Gastrocnemius medialis (tissue), 4 donors: ENCODE measurements at regions of chr14 and their contacts with region 1.

Region 1: DNA sequence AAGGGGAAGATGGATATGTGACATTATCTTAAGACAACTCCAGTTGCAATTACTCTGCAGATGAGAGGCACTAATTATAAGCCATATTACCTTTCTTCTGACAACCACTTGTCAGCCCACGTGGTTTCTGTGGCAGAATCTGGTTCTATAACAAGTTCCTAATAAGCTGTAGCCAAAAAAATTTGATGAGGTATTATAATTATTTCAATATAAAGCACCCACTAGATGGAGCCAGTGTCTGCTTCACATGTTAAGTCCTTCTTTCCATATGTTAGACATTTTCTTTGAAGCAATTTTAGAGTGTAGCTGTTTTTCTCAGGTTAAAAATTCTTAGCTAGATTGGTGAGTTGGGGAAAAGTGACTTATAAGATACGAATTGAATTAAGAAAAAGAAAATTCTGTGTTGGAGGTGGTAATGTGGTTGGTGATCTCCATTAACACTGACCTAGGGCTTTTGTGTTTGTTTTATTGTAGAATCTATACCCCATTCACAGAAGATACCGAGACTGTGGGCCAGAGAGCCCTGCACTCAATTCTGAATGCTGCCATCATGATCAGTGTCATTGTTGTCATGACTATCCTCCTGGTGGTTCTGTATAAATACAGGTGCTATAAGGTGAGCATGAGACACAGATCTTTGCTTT is 36.9 kb downstream of the PSEN1 start:
- DNase-seq: no peak
- ATAC-seq: no peak
- H3K4me3 ChIP-seq: no peak overlapping the region
- H3K27ac ChIP-seq: no peak overlapping the region
- H3K4me1 ChIP-seq: peaks cover 0 to 3% of the 10 kb centered on the region in 2 donors
- H3K27me3 ChIP-seq: no peaks in the 10 kb centered on the region
- CTCF ChIP-seq: peak; percentile 14 to 56 (median 27)
- POLR2A ChIP-seq: no peak

Region 2: DNA sequence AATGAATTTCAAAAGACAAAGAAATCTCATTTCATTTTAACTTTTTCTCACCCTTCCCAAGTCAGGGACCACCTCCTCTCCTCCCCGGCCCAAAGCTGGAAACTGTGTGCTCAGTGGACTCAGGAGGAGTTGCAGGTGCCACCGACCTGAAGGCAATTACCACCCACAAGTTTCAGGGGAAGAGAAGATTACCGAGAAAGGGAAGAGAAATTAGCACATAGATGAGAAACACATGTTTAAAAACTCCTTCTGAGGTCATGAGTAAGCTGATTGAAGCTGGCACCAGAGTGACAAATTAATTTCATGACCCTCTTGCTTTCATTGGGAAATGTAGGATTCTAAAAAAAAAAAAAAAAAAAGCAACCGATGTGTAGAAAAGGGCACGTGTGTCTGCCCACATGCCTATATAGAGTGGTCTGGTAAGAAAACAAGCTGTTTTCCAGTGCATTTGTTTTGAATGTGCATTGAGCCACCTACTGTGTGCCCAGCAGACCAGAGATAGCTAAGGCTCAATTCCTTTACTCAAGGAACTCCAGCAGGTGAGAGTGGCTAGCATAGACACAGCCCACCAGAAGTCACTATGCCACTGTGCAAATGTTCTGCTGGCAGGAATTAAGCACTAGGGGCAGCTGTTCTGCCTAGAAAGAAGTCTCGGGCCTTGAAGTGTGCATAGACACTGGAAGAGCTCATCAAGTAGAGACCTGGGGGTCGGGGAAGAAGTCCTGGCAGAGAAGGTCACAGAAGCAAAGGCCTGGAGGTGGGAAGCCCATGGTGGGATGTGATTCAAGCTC is 309.8 kb before region 1 on chr14:
- in situ Hi-C with region 1: no loop called
- intact Hi-C with region 1: no loop called
- DNase-seq: no peak
- ATAC-seq: no peak
- H3K4me3 ChIP-seq: no peak overlapping the region
- H3K27ac ChIP-seq: no peak overlapping the region
- H3K4me1 ChIP-seq: peaks cover 14 to 35% of the 10 kb centered on the region in 2 donors
- H3K27me3 ChIP-seq: no peaks in the 10 kb centered on the region
- CTCF ChIP-seq: no peak
- POLR2A ChIP-seq: no peak

Region 3: DNA sequence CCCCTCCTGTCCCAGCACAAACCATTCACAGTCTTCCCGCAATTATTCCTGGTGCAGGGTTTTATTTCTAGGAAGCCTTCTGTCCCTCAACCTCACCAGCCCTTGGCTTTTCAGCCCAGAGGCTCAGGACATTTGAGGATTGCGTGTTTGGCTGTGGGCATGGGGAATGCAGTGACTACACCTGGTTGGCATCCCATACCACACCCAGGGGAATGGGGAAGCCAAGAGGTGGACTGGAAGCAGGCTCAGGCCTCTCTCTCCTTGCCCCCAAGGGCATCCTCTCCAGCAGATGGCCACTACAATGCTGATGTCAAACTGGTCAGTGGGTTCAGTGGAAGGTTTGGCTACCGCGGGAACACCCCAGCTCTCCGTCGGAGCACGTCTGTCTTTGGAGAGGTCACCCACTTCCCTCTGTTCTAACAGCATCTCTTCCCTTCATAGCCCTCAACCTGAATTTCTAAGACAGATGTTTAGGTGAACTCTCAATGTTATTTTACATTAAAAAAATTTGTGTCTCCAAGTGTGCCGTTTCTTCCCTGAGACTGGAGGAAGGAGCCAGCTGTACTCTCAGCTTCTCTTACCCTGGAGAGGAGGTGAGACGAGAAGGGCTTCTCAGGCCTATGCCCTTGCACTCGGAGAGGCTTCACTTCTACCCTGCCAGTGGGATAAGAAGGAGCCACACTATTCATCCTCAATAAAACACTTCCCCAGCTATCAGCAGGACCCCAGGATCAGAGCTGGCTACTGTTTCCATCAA is 211.5 kb before region 1 on chr14:
- in situ Hi-C with region 1: no loop called
- intact Hi-C with region 1: no loop called
- DNase-seq: no peak
- ATAC-seq: no peak
- H3K4me3 ChIP-seq: no peak overlapping the region
- H3K27ac ChIP-seq: no peak overlapping the region
- H3K4me1 ChIP-seq: no peaks in the 10 kb centered on the region
- H3K27me3 ChIP-seq: no peaks in the 10 kb centered on the region
- CTCF ChIP-seq: no peak
- POLR2A ChIP-seq: no peak

Region 4: GRCh38 chr14:73069585-73069984 is 103.6 kb before region 1 on chr14:
- in situ Hi-C with region 1: no loop called
- intact Hi-C with region 1: no loop called
- DNase-seq: no peak
- ATAC-seq: no peak
- H3K4me3 ChIP-seq: no peak overlapping the region
- H3K27ac ChIP-seq: no peak overlapping the region
- H3K4me1 ChIP-seq: peaks cover 8 to 10% of the 10 kb centered on the region in 2 donors
- H3K27me3 ChIP-seq: no peaks in the 10 kb centered on the region
- CTCF ChIP-seq: no peak
- POLR2A ChIP-seq: no peak

Region 5: DNA sequence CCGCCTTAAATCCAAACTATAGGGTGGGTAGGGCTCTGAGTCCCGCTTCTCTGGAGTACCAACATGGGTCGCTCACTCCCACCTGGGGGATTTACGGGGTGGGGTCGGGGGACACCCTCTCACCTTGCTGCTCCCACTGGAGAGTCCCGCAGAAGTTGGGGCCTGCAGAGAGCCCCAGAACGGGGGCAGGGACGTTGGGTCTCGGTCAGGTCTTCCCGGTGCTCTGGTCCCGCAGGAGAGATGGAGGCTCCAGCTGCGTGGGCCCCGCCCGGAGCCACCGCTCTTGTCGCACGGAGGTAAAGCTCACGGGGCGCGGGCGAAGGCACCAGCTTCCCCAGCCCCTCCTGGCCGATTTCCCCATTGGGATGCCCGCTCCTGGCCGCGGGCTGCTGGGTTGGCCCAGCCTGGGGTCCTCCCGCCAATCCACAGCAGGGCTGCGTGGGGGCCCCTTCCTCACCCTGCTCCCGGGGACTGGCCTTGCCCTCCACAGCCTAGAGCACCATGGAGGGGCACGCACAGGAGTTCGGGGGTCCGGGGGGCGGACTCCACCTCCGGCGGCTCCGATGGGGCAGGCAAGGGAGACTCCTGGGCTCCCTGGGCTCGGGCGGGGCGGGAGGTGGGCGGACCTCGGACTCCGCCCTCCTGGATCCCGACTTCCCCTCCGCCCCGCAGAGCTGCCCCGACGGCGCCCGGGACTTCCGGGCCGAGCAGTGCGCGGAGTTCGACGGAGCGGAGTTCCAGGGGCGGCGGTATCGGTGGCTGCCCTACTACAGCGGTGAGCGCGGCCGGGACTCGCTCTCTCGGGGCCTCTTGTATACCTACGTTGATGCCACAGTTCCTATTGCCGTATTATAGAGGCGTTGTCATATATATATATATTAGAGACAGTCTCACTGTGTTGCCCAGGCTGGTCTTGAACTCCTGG is 72.4 kb after region 1 on chr14:
- in situ Hi-C with region 1: no loop called
- intact Hi-C with region 1: no loop called
- DNase-seq: no peak
- ATAC-seq: peak in 1 of 2 donors; percentile 55
- H3K4me3 ChIP-seq: peak overlapping the region; percentile 41 to 54 (median 52)
- H3K27ac ChIP-seq: no peak overlapping the region
- H3K4me1 ChIP-seq: peaks cover 0 to 5% of the 10 kb centered on the region in 2 donors
- H3K27me3 ChIP-seq: peaks cover 20 to 26% (median 24%) of the 10 kb centered on the region in 3 donors
- CTCF ChIP-seq: no peak
- POLR2A ChIP-seq: no peak

Region 6: GRCh38 chr14:73269729-73270531 is 96.7 kb after region 1 on chr14:
- in situ Hi-C with region 1: no loop called
- intact Hi-C with region 1: loop called (anchors 10 kb)
- DNase-seq: peak in 1 of 2 donors; percentile 39
- ATAC-seq: peak; percentile 35 to 61
- H3K4me3 ChIP-seq: peak overlapping the region; percentile 50 to 85 (median 54)
- H3K27ac ChIP-seq: peak overlapping the region in 3 of 4 donors; percentile 23 to 28 (median 27)
- H3K4me1 ChIP-seq: peaks cover 7 to 21% of the 10 kb centered on the region in 2 donors
- H3K27me3 ChIP-seq: no peaks in the 10 kb centered on the region
- CTCF ChIP-seq: no peak
- POLR2A ChIP-seq: no peak

Region 7: GRCh38 chr14:73458151-73458976 is 285.1 kb after region 1 on chr14 and contains the start of gene NUMB:
- in situ Hi-C with region 1: loop called in 2 of 4 experiments (anchors 10 to 25 kb)
- intact Hi-C with region 1: no loop called
- DNase-seq: peak; percentile 99
- ATAC-seq: peak; percentile 98 to 99
- H3K4me3 ChIP-seq: peak within 1 kb of the TSS; percentile 78 to 94 (median 90)
- H3K27ac ChIP-seq: peak within 1 kb of the TSS; percentile 90 to 94 (median 92)
- H3K4me1 ChIP-seq: peaks cover 50 to 71% of the 10 kb centered on the region in 2 donors
- H3K27me3 ChIP-seq: no peaks in the 10 kb centered on the region
- CTCF ChIP-seq: peak in 3 of 5 experiments; percentile 12 to 27 (median 15)
- POLR2A ChIP-seq: peak; percentile 78 to 85
- total RNA-seq, gene NUMB: 14.3 to 29.8 (median 23.6) TPM

Region 8: DNA sequence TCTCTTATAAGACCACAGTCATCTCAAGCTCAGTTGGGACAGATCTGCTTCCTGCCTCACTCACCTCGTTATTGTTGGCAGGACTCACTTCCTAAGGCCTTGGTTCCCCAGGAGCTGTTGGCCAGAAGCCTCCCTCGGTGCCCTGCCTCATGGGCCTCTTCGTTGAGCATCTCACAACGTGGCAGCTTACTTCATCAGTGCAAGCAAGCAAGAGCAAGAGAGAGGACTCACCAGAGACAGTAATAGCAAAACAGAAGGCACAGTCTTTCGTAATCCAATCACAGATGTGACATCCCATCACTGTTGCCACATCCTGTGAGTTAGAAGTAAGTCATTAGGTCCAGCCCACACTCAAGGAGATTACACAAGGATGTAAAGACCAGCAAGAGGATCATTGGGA is 290.2 kb after region 1 on chr14:
- in situ Hi-C with region 1: loop called in 2 of 4 experiments (anchors 10 to 25 kb)
- intact Hi-C with region 1: no loop called
- DNase-seq: peak; percentile 23 to 52
- ATAC-seq: peak; percentile 30 to 42
- H3K4me3 ChIP-seq: no peak overlapping the region
- H3K27ac ChIP-seq: peak overlapping the region; percentile 11 to 52 (median 40)
- H3K4me1 ChIP-seq: peaks cover 21 to 41% of the 10 kb centered on the region in 2 donors
- H3K27me3 ChIP-seq: no peaks in the 10 kb centered on the region
- CTCF ChIP-seq: no peak
- POLR2A ChIP-seq: peak in 1 of 2 donors; percentile 10

Region 9: GRCh38 chr14:73472185-73473114 is 299.2 kb after region 1 on chr14:
- in situ Hi-C with region 1: loop called in 3 of 4 experiments (anchors 5 to 25 kb)
- intact Hi-C with region 1: loop called (anchors 2 kb)
- DNase-seq: no peak
- ATAC-seq: peak; percentile 73 to 95
- H3K4me3 ChIP-seq: no peak overlapping the region
- H3K27ac ChIP-seq: no peak overlapping the region
- H3K4me1 ChIP-seq: no peaks in the 10 kb centered on the region
- H3K27me3 ChIP-seq: no peaks in the 10 kb centered on the region
- CTCF ChIP-seq: peak; percentile 57 to 78 (median 72)
- POLR2A ChIP-seq: no peak